Ascending aorta (tissue), 2 donors: ENCODE measurements at regions of chr7 and their contacts with region 1.

Region 1: DNA sequence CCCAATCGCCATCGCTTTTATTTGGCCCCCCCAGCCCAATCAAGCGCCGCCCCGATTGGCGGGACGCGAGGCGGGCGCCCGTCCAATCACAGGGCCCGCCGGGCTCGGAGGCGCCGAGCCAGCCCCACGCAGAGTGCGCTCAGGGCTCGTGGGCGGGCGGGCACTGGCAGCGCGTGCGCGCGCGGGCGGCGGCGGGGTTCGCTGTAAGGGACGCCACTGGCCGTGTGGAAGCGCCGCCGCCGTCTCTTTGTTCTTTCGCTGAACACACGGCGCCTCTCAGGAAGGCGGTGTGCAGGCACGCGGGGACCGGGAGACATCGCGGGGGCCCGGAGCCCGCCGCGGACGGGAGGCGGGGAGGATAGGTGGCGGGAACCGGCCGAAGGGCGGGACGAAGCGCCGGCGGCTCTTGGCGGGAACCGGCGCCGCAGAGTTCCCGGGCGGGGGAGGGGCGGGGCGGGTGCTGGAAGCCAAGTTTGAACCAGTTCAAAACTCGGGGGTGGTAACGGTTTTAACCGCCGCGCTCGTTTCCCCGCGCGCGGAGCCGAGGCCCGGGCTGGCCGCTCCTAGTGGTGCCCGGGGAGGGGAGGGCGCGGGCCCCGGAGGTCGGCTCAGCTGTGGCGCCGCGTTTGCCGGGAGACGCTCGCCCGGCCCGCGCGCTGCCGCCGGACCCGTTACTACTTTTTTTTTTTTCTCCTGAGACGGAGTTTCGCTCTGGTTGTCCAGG is 370 bp upstream of the EZH2 start:
- DNase-seq: peak; percentile 75 to 95
- H3K4me3 ChIP-seq: peak overlapping the region; percentile 93
- H3K27ac ChIP-seq: peak overlapping the region; percentile 88 to 91
- H3K4me1 ChIP-seq: no peaks in the 10 kb centered on the region
- H3K27me3 ChIP-seq: no peaks in the 10 kb centered on the region
- CTCF ChIP-seq: no peak

Region 2: GRCh38 chr7:147937428-147937827 is 947.0 kb before region 1 on chr7:
- intact Hi-C with region 1: no loop called
- DNase-seq: no peak
- H3K4me3 ChIP-seq: no peak overlapping the region
- H3K27ac ChIP-seq: no peak overlapping the region
- H3K4me1 ChIP-seq: no peaks in the 10 kb centered on the region
- H3K27me3 ChIP-seq: no peaks in the 10 kb centered on the region
- CTCF ChIP-seq: no peak

Region 3: DNA sequence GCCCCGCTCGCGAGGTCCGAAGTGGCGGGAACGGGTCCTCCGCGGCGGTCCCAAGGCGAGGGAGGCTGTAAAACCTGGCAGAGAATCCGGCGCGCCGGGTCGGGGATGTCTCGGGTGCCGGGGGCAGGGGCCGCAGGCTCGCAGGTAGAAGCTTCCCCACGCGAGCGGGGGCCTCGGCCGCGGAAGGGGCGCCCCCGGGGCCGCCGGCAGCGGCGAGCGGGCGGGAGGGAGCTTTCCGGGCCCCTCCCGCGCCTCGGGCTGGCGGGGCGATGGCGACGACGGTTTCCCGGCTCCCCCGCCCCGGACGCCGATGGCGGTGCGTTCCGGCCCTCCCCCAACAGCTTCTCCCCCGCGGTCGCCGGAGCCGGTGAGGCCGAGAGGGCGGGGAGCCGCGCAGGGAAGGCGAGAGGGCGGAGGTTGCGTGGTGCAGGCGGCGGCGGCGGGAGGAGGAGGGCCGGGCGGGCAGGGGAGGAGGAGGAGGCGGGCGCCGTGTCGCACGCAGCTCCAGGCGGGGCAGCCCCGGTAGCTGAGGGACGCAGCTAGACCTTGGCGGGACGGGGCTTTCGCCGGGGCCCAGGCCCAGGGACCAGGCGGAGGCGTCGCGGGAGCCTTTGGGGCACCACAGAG is 186.0 kb before region 1 on chr7 and contains the start of gene CUL1:
- intact Hi-C with region 1: loop called (anchors 2 kb)
- DNase-seq: peak; percentile 36 to 92
- H3K4me3 ChIP-seq: peak within 1 kb of the TSS; percentile 97 to 99
- H3K27ac ChIP-seq: peak within 1 kb of the TSS; percentile 99 to 100
- H3K4me1 ChIP-seq: peaks cover 4 to 30% of the 10 kb centered on the region in 2 donors
- H3K27me3 ChIP-seq: no peaks in the 10 kb centered on the region
- CTCF ChIP-seq: no peak
- total RNA-seq, gene CUL1: 16.3 TPM

Region 4: DNA sequence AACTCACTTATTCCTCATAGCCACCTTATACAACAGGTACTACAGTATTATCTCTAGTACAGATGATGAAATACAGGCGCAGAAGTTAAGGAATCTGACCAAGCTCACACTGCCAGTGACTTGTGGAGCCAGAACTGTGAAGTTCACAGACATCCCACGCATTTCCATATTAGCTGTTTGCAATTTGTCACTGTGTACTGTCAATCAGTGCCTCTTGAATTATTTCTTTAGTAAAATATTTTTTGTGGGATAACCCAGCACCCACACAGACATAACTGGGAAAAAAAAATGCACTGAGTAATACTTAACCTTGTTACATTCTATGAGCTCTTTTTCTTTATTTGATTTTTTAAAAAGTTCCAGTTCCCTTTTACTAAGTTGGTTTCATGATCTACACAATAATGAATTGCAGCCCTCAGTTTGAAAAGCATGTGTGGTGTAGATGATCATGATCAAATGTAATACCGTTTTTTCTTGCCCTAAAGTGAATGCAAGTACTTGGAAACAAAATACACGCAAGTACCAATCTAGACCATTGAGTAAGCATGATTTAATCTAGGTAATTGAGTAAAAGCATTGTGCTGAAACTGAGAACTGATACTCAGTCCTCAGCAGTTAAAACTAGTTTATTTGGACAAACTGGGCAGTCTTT is 171.7 kb before region 1 on chr7:
- intact Hi-C with region 1: no loop called
- DNase-seq: no peak
- H3K4me3 ChIP-seq: no peak overlapping the region
- H3K27ac ChIP-seq: no peak overlapping the region
- H3K4me1 ChIP-seq: peaks cover 0 to 9% of the 10 kb centered on the region in 2 donors
- H3K27me3 ChIP-seq: no peaks in the 10 kb centered on the region
- CTCF ChIP-seq: no peak

Region 5: DNA sequence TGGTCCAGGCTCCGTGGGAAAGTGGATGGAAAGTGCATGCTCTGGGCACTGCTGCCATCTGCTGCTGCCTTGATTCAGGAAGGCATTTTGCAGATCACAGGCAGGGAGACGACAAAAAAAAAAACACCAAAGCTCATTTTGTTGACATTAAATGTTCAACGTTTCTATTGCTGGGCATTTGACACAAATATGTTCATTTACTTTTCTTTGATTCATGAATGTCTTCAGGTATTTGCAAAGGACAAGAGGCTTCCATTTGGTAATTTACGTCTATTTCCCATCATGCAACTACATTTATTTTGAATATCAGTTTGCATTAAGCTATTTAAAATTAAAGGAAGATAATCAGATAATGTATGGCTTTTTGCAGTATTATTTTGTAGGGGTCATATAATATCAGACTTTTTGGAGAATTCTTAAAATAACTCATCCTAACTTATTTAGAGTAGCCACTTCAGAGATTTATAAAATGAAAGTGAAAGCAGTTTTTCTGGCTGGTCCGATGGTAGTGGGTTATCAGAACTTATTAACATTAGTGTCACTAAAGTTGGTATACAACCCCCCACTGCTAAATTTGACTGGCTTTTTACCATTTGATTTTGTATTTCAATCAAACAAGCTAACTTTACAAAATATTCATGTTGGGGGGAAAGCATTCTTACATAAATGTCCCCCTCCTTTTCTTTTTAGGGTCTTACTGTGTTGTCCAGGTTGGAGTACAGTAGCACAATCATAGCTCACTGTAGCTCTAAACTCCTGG is 78.5 kb after region 1 on chr7:
- intact Hi-C with region 1: loop called (anchors 1 kb)
- DNase-seq: peak in 1 of 2 donors; percentile 77
- H3K4me3 ChIP-seq: peak overlapping the region; percentile 65 to 71
- H3K27ac ChIP-seq: peak overlapping the region; percentile 68 to 79
- H3K4me1 ChIP-seq: peaks cover 0 to 2% of the 10 kb centered on the region in 2 donors
- H3K27me3 ChIP-seq: no peaks in the 10 kb centered on the region
- CTCF ChIP-seq: peak; percentile 46 to 73 (median 67)

Region 6: DNA sequence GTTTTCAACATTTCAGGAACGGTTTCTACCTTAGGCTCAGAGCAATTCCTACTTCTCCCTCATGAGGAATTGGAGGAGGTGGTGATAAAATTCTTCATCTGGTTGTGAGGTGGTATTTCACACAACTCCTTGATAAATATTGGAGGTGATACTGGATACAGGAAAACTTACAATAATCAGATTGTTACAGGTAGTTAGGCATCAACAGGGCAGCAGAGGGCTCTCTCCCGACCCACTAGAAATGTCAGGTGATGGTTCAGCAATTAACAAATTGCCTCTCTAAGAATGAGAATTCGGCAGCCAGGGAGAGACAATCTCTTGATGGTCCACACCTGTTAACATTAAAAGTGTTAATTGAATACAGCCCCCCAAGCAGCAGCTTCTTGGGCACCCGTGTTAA is 183.4 kb after region 1 on chr7:
- intact Hi-C with region 1: loop called (anchors 10 kb)
- DNase-seq: no peak
- H3K4me3 ChIP-seq: no peak overlapping the region
- H3K27ac ChIP-seq: no peak overlapping the region
- H3K4me1 ChIP-seq: no peaks in the 10 kb centered on the region
- H3K27me3 ChIP-seq: no peaks in the 10 kb centered on the region
- CTCF ChIP-seq: no peak

Region 7: DNA sequence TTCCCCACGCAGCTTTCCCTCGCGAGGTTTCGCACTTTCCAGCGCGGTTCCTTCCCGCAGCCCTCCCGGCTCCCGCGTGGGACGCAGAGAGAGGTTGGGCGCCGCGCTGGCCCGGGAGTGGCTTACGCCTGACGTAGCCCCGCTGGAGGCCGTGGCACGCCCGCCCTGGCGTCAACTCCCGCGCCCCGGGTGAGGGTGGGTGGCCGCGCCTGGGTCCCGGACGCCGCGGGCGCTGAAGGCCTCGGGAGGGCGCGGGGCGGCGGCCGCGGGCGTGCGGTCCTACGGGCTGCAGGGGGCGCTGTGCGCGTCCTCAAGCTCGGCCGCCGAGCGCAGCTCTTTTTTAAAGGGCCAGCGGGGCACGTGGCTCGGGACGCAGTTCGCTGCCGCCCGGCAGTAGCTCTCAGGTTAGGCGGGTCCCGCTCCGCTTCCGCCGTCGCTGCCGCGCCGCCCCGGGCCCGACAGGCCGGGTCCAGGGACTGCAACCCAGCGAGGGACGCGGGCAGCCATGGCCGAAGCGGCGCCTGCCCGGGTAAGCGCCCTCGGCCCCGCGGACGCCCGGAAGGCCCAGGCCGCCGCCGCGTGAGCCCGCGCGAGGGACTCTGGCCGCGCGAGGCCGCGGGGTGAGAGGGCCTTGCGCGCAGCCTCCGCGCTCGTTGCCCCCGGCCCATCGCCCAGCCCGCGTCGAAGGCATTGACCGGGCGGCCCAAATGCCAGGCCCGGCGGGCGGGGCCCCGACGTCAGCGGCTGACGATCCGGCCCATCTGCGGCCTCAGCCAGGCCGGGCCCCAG is 377.6 kb after region 1 on chr7 and contains the start of gene ZNF783:
- intact Hi-C with region 1: loop called (anchors 10 kb)
- DNase-seq: peak; percentile 44 to 93
- H3K4me3 ChIP-seq: peak within 1 kb of the TSS; percentile 72 to 91
- H3K27ac ChIP-seq: peak within 1 kb of the TSS; percentile 86 to 95
- H3K4me1 ChIP-seq: peaks cover 3 to 12% of the 10 kb centered on the region in 2 donors
- H3K27me3 ChIP-seq: no peaks in the 10 kb centered on the region
- CTCF ChIP-seq: peak; percentile 49 to 93 (median 67)
- total RNA-seq, gene ZNF783: 25.7 TPM